ENCODE measurements at regions of chr11 and their contacts with region 1.

Region 1: DNA sequence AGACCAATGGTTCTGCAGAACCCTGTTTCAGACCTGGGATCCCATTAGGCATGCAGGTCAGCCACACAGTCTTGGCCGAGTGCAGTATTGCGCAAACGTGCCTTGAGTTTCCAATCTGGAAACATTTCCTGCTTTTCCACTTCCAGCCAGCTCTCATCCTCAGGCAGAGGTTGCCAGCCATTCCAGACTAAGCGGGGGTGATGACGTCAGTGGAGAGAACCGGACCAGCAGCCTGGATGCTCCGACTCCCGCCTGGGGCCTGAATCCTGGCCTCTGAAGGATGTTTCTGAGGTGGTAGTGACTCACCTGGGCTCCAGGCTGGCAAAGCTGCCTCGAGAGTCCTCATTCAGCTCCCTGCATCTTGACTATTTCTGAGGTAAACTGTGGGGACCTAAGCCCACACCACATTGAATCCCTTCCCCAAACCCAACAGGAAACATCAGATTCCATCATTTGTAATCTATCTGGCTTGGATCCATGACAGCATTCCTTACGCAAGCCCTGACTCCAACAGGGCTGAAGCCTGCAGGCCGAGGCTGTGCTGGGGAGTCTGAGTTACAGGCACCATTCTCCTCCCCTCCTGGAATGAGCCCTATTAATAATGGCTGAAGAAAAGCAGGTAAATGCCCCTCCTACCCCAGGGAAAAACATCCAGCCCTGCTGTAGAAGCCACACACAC is 82.9 kb downstream of the ABTB2 start:
- DNase-seq: no peak
- ATAC-seq: no peak
- H3K4me3 Mint-ChIP-seq: no peak overlapping the region
- H3K27ac Mint-ChIP-seq: no peak overlapping the region
- H3K4me1 Mint-ChIP-seq: no peaks in the 10 kb centered on the region
- H3K27me3 Mint-ChIP-seq: no peaks in the 10 kb centered on the region
- CTCF ChIP-seq: no peak

Region 2: DNA sequence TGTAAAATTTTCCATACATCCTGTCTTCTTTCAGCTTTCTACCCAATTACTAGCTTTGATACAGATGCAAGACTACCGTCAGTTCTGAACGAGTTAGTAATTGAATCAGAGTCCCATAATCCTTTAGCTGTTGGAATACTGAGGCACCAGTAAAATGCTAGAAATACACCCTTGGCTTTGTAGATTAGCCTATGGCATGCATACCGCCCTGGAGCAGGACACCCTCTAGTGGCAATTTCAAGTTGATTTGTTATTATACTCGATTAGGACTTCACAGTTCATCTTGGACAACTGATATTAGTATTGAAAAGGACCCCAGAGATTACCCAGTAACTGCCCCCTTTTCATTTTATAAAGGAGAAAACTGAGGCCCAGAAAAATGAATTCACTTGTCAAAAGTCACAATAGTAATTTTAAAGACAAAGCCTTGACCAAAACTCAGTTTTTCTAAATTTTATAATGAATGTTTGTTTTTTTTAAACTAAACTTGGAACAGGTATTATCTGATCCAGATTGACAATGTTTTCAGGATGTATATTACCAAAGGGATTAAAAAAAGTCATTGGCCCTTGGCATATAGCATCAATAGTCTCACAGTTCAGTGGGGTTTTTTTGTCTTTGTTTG is 945.0 kb before region 1 on chr11:
- CTCF ChIA-PET with region 1: no interaction called
- POLR2A ChIA-PET with region 1: no interaction called
- intact Hi-C with region 1: no loop called
- DNase-seq: no peak
- ATAC-seq: peak; percentile 65
- H3K4me3 Mint-ChIP-seq: no peak overlapping the region
- H3K27ac Mint-ChIP-seq: no peak overlapping the region
- H3K4me1 Mint-ChIP-seq: peaks cover 14% of the 10 kb centered on the region
- H3K27me3 Mint-ChIP-seq: no peaks in the 10 kb centered on the region
- CTCF ChIP-seq: no peak

Region 3: DNA sequence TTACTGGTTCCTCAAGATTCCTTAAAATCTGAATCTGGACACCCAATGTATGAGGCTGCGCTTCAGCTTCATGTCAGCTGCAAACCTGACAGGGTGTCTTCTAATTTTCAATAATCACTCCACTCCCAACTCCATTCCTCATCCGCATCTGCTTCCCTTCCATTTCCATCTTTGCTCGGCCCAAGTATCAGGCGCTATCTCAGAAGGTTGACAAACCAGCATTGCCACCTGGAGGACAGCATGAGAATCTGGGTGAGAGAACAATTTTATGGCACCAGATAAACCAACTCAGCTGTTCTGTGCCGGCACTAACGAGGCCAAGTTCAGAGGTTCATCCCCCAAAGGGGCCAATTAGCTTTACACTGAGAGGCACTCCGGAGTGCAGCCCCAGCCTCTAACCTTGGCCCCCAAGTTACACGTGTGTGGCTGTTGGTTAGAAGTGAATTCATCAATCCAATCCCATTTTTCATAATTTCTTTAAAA is 303.8 kb before region 1 on chr11:
- CTCF ChIA-PET with region 1: no interaction called
- POLR2A ChIA-PET with region 1: no interaction called
- intact Hi-C with region 1: no loop called
- DNase-seq: no peak
- ATAC-seq: peak; percentile 87
- H3K4me3 Mint-ChIP-seq: no peak overlapping the region
- H3K27ac Mint-ChIP-seq: no peak overlapping the region
- H3K4me1 Mint-ChIP-seq: peaks cover 5% of the 10 kb centered on the region
- H3K27me3 Mint-ChIP-seq: peaks cover 4% of the 10 kb centered on the region
- CTCF ChIP-seq: no peak

Region 4: GRCh38 chr11:34250732-34251639 is 23.9 kb before region 1 on chr11:
- CTCF ChIA-PET with region 1: no interaction called
- POLR2A ChIA-PET with region 1: no interaction called
- intact Hi-C with region 1: no loop called
- DNase-seq: peak; percentile 63
- ATAC-seq: peak; percentile 98
- H3K4me3 Mint-ChIP-seq: peak overlapping the region; percentile 55
- H3K27ac Mint-ChIP-seq: peak overlapping the region; percentile 71
- H3K4me1 Mint-ChIP-seq: peaks cover 55% of the 10 kb centered on the region
- H3K27me3 Mint-ChIP-seq: no peaks in the 10 kb centered on the region
- CTCF ChIP-seq: no peak

Region 5: GRCh38 chr11:34263440-34264172 is 11.3 kb before region 1 on chr11:
- CTCF ChIA-PET with region 1: no interaction called
- POLR2A ChIA-PET with region 1: no interaction called
- intact Hi-C with region 1: no loop called
- DNase-seq: no peak
- ATAC-seq: no peak
- H3K4me3 Mint-ChIP-seq: no peak overlapping the region
- H3K27ac Mint-ChIP-seq: no peak overlapping the region
- H3K4me1 Mint-ChIP-seq: peaks cover 10% of the 10 kb centered on the region
- H3K27me3 Mint-ChIP-seq: no peaks in the 10 kb centered on the region
- CTCF ChIP-seq: no peak

Region 6: GRCh38 chr11:34344768-34345539 is 70.1 kb after region 1 on chr11:
- CTCF ChIA-PET with region 1: no interaction called
- POLR2A ChIA-PET with region 1: interaction called, 10 read pairs
- intact Hi-C with region 1: no loop called
- DNase-seq: no peak
- ATAC-seq: no peak
- H3K4me3 Mint-ChIP-seq: no peak overlapping the region
- H3K27ac Mint-ChIP-seq: no peak overlapping the region
- H3K4me1 Mint-ChIP-seq: peaks cover 1% of the 10 kb centered on the region
- H3K27me3 Mint-ChIP-seq: no peaks in the 10 kb centered on the region
- CTCF ChIP-seq: no peak